Common myeloid progenitor, CD34-positive (primary cell): ENCODE measurements at regions of chr11 and their contacts with region 1.

Region 1: DNA sequence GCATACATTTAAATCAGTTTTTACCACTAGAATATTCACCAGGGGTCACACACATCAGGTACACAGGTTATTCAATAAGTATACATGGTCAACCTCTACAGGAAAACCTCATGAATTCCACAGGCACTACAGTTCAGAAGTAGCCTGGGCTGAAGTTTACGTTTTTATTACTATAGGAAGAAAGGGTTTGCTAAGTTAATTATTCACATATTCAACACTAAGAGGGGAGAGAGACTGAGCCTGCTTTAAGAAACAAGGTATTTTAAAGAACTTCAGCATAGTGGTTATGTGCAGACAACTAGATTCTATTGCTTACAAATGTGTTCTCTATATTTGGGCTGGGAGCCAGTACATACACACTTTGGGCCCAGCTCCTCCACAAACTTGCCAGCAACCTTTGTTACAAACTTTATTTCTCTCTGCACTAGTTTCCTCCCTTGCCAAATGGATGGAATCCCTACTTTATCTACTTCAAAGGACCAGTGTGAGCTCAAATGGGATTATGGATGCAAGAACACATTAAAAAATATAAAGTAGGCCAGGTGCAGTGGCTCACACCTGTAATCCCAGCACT is 31.9 kb downstream of the IL18BP start:
- DNase-seq: no peak
- H3K4me3 ChIP-seq: no peak overlapping the region
- H3K27ac ChIP-seq: no peak overlapping the region
- H3K4me1 ChIP-seq: peaks cover 0 to 5% (median 1%) of the 10 kb centered on the region in 4 experiments
- H3K27me3 ChIP-seq: no peaks in the 10 kb centered on the region

Region 2: DNA sequence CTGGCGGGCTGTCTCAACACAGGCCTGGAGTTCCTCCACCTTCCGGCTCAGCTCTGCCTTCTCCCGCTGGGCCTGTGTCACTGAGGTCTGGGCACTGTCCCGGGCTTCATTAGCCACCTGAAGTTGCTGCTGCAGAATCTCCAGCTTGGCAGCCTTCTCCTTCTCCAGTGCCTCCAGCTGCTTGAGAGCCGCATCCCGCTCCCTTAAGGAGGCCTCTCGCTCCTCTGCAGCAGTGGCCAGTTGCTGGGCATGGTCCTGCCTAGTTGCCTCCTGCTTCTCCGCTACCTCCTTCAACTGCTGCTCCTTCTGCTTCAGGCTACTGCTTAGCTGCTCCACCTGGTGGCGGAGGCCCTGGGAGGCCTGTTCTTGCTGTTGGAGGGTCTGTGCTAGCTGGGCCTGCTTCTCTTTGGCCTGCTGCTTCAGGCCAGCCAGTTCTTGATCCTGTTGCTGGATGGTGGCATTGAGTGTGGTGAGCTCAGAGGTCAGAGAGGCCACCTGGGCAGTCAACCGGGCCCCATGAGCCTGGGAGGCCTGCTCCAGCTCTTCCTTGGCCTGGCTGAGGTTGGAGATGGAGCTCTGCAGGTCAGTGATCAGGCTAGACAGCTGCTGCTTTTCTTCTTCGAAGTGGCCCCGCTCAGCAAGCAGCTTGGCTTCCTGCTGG is 14.9 kb before region 1 on chr11:
- CTCF ChIA-PET with region 1: interaction called, 99 read pairs
- POLR2A ChIA-PET with region 1: no interaction called
- DNase-seq: peak; percentile 45 to 61 (median 60)
- H3K4me3 ChIP-seq: no peak overlapping the region
- H3K27ac ChIP-seq: no peak overlapping the region
- H3K4me1 ChIP-seq: no peaks in the 10 kb centered on the region
- H3K27me3 ChIP-seq: no peaks in the 10 kb centered on the region

Region 3: DNA sequence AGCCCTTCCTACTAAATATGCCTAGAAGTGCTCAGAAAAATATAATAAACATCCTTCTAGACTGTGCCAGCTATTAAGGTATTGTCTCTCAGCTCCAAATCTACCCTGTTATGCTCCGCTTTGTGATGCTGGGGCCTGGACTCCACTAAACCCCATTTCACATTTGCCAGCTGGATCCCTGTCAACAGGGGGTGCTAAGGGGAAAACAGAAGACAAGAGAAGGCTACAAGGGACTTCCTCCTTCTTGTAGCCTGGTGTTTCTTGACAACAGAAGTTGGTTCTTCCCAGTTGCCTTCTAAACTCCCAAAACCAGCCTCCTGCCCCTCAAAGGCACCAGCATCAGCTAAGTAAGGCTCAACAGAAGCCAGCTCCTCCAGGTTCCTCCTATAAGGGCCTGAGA is 44.5 kb after region 1 on chr11:
- CTCF ChIA-PET with region 1: interaction called, 23 read pairs
- POLR2A ChIA-PET with region 1: interaction called, 3 read pairs
- DNase-seq: peak; percentile 73 to 76 (median 75)
- H3K4me3 ChIP-seq: peak overlapping the region in 5 of 7 experiments; percentile 9 to 65 (median 36)
- H3K27ac ChIP-seq: peak overlapping the region; percentile 50 to 85
- H3K4me1 ChIP-seq: peaks cover 4 to 53% (median 23%) of the 10 kb centered on the region in 4 experiments
- H3K27me3 ChIP-seq: no peaks in the 10 kb centered on the region

Region 4: GRCh38 chr11:72085621-72086351 is 55.2 kb after region 1 on chr11:
- CTCF ChIA-PET with region 1: interaction called, 394 read pairs
- POLR2A ChIA-PET with region 1: interaction called, 10 read pairs
- DNase-seq: no peak
- H3K4me3 ChIP-seq: no peak overlapping the region
- H3K27ac ChIP-seq: peak overlapping the region in 1 of 2 experiments; percentile 15
- H3K4me1 ChIP-seq: peaks cover 6 to 23% (median 20%) of the 10 kb centered on the region in 4 experiments
- H3K27me3 ChIP-seq: no peaks in the 10 kb centered on the region

Region 5: DNA sequence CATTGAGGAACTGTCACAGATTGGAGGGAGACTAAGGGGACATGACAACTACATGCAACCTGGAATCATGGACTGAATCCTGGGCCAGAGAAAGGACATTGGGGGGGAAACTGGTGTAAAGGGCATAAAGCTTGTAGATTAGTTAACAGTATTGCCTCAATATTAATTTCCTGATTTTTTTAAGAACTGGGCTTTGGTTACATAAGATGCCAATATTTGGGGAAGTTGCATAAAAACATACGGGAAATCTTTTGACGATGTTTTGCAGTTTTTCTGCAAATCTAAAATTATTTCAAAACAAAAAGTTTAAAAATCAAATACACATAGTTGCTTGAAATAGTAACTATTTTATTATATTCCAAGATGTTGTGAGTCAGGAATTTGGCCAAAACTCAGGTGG is 102.1 kb after region 1 on chr11:
- CTCF ChIA-PET with region 1: no interaction called
- POLR2A ChIA-PET with region 1: no interaction called
- DNase-seq: peak in 2 of 3 donors; percentile 33 to 49
- H3K4me3 ChIP-seq: peak overlapping the region in 1 of 7 experiments; percentile 18
- H3K27ac ChIP-seq: no peak overlapping the region
- H3K4me1 ChIP-seq: peaks cover 6 to 13% (median 8%) of the 10 kb centered on the region in 4 experiments
- H3K27me3 ChIP-seq: no peaks in the 10 kb centered on the region

Region 6: DNA sequence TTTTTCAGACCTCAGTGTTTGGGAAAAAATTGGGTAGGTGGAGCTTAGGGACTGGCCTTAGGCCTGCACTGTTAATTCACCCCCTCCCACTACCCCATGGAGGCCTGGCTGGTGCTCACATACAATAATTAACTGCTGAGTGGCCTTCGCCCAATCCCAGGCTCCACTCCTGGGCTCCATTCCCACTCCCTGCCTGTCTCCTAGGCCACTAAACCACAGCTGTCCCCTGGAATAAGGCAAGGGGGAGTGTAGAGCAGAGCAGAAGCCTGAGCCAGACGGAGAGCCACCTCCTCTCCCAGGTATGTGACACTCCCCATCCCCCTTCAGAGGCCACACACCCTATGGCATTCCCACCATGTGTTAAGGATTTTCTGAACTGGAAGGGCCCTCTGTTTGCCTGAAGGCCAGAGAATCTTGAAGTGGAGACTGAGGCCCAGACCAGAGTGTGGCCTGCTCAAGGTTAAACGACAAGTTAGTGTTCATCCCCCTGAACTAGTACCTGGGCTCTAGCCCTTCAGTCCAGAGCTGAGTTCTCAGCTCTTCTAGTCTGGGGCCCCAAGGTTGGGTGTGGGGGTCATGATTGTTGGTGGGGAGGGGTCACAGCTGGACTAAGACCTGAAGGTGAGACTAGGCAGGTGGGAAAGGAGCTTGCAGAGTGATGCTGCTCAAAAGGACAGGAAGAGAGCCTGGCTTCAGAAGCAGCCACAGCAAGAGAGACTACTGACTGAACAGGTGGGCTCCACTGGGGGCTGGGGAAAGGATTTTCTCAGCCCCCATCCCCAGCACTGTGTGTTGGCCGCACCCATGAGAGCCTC is 159.1 kb after region 1 on chr11:
- CTCF ChIA-PET with region 1: interaction called, 26 read pairs
- POLR2A ChIA-PET with region 1: no interaction called
- DNase-seq: no peak
- H3K4me3 ChIP-seq: no peak overlapping the region
- H3K27ac ChIP-seq: no peak overlapping the region
- H3K4me1 ChIP-seq: no peaks in the 10 kb centered on the region
- H3K27me3 ChIP-seq: no peaks in the 10 kb centered on the region